ENCODE measurements at regions of chr17 and their contacts with region 1.

Region 1: GRCh38 chr17:63549946-63550807 is at the start of gene DCAF7:
- DNase-seq: peak; percentile 99
- ATAC-seq: peak; percentile 94
- H3K4me3 ChIP-seq: peak within 1 kb of the TSS; percentile 99
- H3K27ac ChIP-seq: peak within 1 kb of the TSS; percentile 96
- H3K4me1 ChIP-seq: peaks cover 15% of the 10 kb centered on the region
- H3K27me3 ChIP-seq: no peaks in the 10 kb centered on the region
- CTCF ChIP-seq: no peak
- EP300 ChIP-seq: 0 out of 4 replicates have a peak, but pooled peaks of 1 of the 2 experiments have one; percentile 23
- POLR2A ChIP-seq: peak; percentile 86
- RAD21 ChIP-seq: no peak
- polyA plus RNA-seq, gene DCAF7: 27.0 to 27.4 TPM

Region 2: GRCh38 chr17:63533429-63534077 is 16.6 kb before region 1 on chr17:
- CTCF ChIA-PET with region 1: no interaction called
- POLR2A ChIA-PET with region 1: no interaction called
- RAD21 ChIA-PET with region 1: no interaction called
- SMC1A ChIA-PET with region 1: no interaction called
- in situ Hi-C with region 1: no loop called
- intact Hi-C with region 1: no loop called
- DNase-seq: no peak
- ATAC-seq: no peak
- H3K4me3 ChIP-seq: no peak overlapping the region
- H3K27ac ChIP-seq: no peak overlapping the region
- H3K4me1 ChIP-seq: no peaks in the 10 kb centered on the region
- H3K27me3 ChIP-seq: peaks cover 0 to 3% of the 10 kb centered on the region in 2 experiments; a peak in 3 of 4 replicates
- CTCF ChIP-seq: no peak
- EP300 ChIP-seq: no peak
- POLR2A ChIP-seq: no peak
- RAD21 ChIP-seq: no peak

Region 3: DNA sequence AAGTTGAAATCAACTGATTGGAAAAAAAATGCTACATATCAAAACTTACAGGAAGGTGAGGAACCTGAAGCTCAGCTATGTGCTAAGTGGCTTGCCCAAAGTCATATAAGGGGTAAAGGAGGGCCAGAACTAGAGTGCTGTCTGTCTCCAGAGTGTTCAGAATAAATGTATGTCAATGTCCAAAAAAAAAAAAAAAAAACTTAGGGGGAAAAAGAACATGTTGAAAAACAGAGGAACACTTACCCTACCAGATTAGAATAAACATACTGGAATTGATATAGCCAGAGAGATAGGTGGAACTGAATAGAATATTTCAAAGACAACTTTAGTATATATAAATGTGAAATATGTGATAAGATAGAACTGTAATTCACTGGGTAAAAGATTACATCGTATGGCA is 11.7 kb after region 1 on chr17:
- CTCF ChIA-PET with region 1: interaction called, 4 read pairs
- POLR2A ChIA-PET with region 1: interaction called, 7 read pairs
- RAD21 ChIA-PET with region 1: no interaction called
- SMC1A ChIA-PET with region 1: interaction called, 12 read pairs
- in situ Hi-C with region 1: no loop called
- intact Hi-C with region 1: no loop called
- DNase-seq: no peak
- ATAC-seq: no peak
- H3K4me3 ChIP-seq: no peak overlapping the region
- H3K27ac ChIP-seq: no peak overlapping the region
- H3K4me1 ChIP-seq: peaks cover 9% of the 10 kb centered on the region; the same call in 1 of the 2 replicates
- H3K27me3 ChIP-seq: no peaks in the 10 kb centered on the region
- CTCF ChIP-seq: no peak
- EP300 ChIP-seq: no peak
- POLR2A ChIP-seq: no peak
- RAD21 ChIP-seq: no peak

Region 4: GRCh38 chr17:63621766-63622519 is 71.8 kb after region 1 on chr17 and contains the start of gene MAP3K3:
- CTCF ChIA-PET with region 1: interaction called, 3 read pairs
- POLR2A ChIA-PET with region 1: interaction called, 13 read pairs
- RAD21 ChIA-PET with region 1: interaction called, 4 read pairs
- SMC1A ChIA-PET with region 1: interaction called, 4 read pairs
- in situ Hi-C with region 1: no loop called
- intact Hi-C with region 1: loop called (anchors 5 kb)
- DNase-seq: peak; percentile 99
- ATAC-seq: peak; percentile 94
- H3K4me3 ChIP-seq: peak within 1 kb of the TSS; percentile 99
- H3K27ac ChIP-seq: peak within 1 kb of the TSS; percentile 67
- H3K4me1 ChIP-seq: peaks cover 5% of the 10 kb centered on the region; the same call in 1 of the 2 replicates
- H3K27me3 ChIP-seq: no peaks in the 10 kb centered on the region
- CTCF ChIP-seq: 0 out of 6 replicates have a peak, but pooled peaks of 1 of the 3 experiments have one; percentile 17
- EP300 ChIP-seq: no peak
- POLR2A ChIP-seq: peak; percentile 92
- RAD21 ChIP-seq: no peak
- polyA plus RNA-seq, gene MAP3K3: 1.6 to 2.0 TPM